CD8-positive, alpha-beta memory T cell (primary cell): ENCODE measurements at regions of chr6 and their contacts with region 1.

Region 1: GRCh38 chr6:33344701-33345697 is 27.5 kb upstream of the ZBTB22 start:
- DNase-seq: peak; percentile 58 to 87 (median 84)
- H3K4me3 ChIP-seq: peak overlapping the region; percentile 56
- H3K4me3 Mint-ChIP-seq: peak overlapping the region; percentile 69 to 92 (median 85)
- H3K27ac ChIP-seq: peak overlapping the region; percentile 77
- H3K27ac Mint-ChIP-seq: peak overlapping the region; percentile 85 to 99 (median 97)
- H3K4me1 ChIP-seq: peaks cover 35% of the 10 kb centered on the region
- H3K4me1 Mint-ChIP-seq: peaks cover 39 to 41% (median 40%) of the 10 kb centered on the region in 3 donors
- H3K27me3 ChIP-seq: no peaks in the 10 kb centered on the region
- H3K27me3 Mint-ChIP-seq: peaks cover 0 to 4% of the 10 kb centered on the region in 2 donors

Region 2: DNA sequence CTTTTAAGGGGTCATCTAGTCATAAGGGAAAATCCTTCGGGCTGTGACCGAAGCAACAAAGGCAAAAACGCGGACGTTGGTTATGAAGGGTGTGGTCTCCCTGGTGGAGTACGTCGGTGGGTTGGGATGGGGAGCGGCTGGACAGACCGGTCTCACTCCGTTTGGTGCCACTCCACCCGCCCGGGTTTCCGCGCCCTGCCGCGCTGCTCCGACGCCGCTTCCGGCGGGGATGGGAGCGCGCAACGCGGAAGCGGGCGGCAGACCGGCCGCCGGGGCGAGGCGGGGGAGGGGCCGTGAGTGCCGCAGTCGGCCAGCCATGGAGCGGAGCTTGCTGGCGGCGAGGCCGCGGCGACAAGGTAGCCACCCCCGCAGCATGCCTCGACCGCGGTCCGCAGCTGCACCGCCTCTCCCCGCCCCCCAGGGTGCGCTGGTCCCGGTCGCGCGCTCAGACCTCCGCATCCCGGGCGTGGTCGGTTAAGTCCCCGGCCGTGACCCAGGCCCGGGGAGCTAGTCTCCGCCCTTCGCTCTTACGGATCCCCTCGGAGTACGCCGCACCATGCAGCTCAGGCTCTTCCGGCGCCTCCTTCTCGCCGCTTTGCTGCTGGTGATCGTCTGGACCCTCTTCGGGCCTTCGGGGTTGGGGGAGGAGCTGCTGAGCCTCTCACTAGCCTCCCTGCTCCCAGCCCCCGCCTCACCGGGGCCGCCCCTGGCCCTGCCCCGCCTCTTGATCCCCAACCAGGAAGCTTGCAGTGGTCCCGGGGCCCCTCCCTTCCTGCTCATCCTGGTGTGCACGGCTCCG is 67.9 kb before region 1 on chr6 and contains the start of gene B3GALT4:
- CTCF ChIA-PET with region 1: interaction called, 20 read pairs
- POLR2A ChIA-PET with region 1: interaction called, 29 read pairs
- DNase-seq: peak; percentile 58 to 79 (median 73)
- H3K4me3 ChIP-seq: peak within 1 kb of the TSS; percentile 80
- H3K4me3 Mint-ChIP-seq: peak within 1 kb of the TSS; percentile 88 to 98 (median 89)
- H3K27ac ChIP-seq: peak within 1 kb of the TSS; percentile 68
- H3K27ac Mint-ChIP-seq: peak within 1 kb of the TSS; percentile 90 to 99 (median 94)
- H3K4me1 ChIP-seq: peaks cover 57% of the 10 kb centered on the region
- H3K4me1 Mint-ChIP-seq: peaks cover 61 to 92% (median 79%) of the 10 kb centered on the region in 3 donors
- H3K27me3 ChIP-seq: no peaks in the 10 kb centered on the region
- H3K27me3 Mint-ChIP-seq: no peaks in the 10 kb centered on the region
- total RNA-seq, gene B3GALT4: 6.1 to 7.0 TPM

Region 3: GRCh38 chr6:33299237-33299944 is 45.6 kb before region 1 on chr6:
- CTCF ChIA-PET with region 1: interaction called, 35 read pairs
- POLR2A ChIA-PET with region 1: interaction called, 22 read pairs
- DNase-seq: peak; percentile 88 to 95 (median 90)
- H3K4me3 ChIP-seq: peak overlapping the region; percentile 99
- H3K4me3 Mint-ChIP-seq: peak overlapping the region; percentile 98 to 100 (median 99)
- H3K27ac ChIP-seq: peak overlapping the region; percentile 89
- H3K27ac Mint-ChIP-seq: peak overlapping the region; percentile 94 to 100 (median 99)
- H3K4me1 ChIP-seq: peaks cover 11% of the 10 kb centered on the region
- H3K4me1 Mint-ChIP-seq: peaks cover 34 to 52% (median 36%) of the 10 kb centered on the region in 3 donors
- H3K27me3 ChIP-seq: no peaks in the 10 kb centered on the region
- H3K27me3 Mint-ChIP-seq: peaks cover 0 to 5% of the 10 kb centered on the region in 2 donors

Region 4: GRCh38 chr6:33329058-33329457 is 15.9 kb before region 1 on chr6:
- CTCF ChIA-PET with region 1: interaction called, 4 read pairs
- POLR2A ChIA-PET with region 1: interaction called, 10 read pairs
- DNase-seq: no peak
- H3K4me3 ChIP-seq: no peak overlapping the region
- H3K4me3 Mint-ChIP-seq: peak overlapping the region in 1 of 7 donors; percentile 16
- H3K27ac ChIP-seq: no peak overlapping the region
- H3K27ac Mint-ChIP-seq: peak overlapping the region in 1 of 8 donors; percentile 47
- H3K4me1 ChIP-seq: peaks cover 4% of the 10 kb centered on the region
- H3K4me1 Mint-ChIP-seq: peaks cover 3 to 4% (median 4%) of the 10 kb centered on the region in 3 donors
- H3K27me3 ChIP-seq: no peaks in the 10 kb centered on the region
- H3K27me3 Mint-ChIP-seq: peaks cover 0 to 3% of the 10 kb centered on the region in 2 donors